Naive thymus-derived CD4-positive, alpha-beta T cell (primary cell): ENCODE measurements at regions of chr15 and their contacts with region 1.

Region 1: DNA sequence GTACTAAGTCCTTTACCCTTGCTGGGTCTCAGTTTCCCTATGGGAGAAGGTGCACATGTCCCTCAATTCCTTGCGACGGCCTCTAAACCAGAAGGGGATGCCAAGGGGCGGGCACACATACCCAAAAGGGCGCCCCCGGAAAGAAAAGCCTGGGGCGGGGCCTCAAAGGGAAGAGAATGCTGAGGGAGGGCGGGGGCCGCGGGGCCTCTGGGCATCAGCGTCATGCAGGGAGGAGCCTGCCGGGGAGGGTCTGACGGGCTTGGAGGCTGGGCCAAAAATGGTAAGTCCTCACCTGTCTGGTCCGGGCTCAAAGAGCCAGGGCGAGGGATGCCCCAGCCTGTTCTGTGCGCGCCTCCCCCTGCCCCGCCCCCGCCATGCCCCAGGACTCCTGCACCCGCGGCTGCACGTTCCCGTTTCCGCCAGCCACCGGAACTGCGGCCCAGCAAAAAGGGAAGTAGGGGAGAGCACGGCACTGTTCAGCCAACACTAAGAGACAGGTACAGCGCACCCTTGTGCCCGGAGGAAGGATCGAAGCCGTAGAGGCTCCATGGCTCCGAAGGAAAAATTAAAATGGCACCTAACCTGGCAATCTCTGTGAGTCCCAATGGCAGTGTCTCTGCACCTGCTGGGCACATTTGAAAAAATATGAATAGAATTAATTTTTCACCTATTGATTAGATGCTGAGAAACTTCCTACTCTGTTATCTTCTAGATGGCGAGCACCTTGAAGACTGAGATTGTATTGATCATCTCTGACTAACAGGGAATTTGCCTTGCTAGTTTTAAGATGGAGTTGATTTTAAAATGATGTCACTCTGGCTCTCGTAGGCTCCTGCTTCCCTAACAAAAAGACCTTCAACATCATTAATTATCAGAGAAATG is at the start of gene DET1:
- DNase-seq: peak; percentile 75 to 94 (median 92)
- ATAC-seq: peak; percentile 97
- H3K4me3 ChIP-seq: peak within 1 kb of the TSS; percentile 66
- H3K4me3 Mint-ChIP-seq: peak within 1 kb of the TSS; percentile 80 to 96 (median 90)
- H3K27ac ChIP-seq: peak within 1 kb of the TSS; percentile 81
- H3K27ac Mint-ChIP-seq: peak within 1 kb of the TSS; percentile 85 to 97 (median 92)
- H3K4me1 ChIP-seq: peaks cover 0 to 5% of the 10 kb centered on the region in 2 donors
- H3K4me1 Mint-ChIP-seq: peaks cover 9 to 24% (median 14%) of the 10 kb centered on the region in 7 donors
- H3K27me3 ChIP-seq: no peaks in the 10 kb centered on the region
- H3K27me3 Mint-ChIP-seq: no peaks in the 10 kb centered on the region
- total RNA-seq, gene DET1: 4.5 to 16.5 (median 8.4) TPM

Region 2: DNA sequence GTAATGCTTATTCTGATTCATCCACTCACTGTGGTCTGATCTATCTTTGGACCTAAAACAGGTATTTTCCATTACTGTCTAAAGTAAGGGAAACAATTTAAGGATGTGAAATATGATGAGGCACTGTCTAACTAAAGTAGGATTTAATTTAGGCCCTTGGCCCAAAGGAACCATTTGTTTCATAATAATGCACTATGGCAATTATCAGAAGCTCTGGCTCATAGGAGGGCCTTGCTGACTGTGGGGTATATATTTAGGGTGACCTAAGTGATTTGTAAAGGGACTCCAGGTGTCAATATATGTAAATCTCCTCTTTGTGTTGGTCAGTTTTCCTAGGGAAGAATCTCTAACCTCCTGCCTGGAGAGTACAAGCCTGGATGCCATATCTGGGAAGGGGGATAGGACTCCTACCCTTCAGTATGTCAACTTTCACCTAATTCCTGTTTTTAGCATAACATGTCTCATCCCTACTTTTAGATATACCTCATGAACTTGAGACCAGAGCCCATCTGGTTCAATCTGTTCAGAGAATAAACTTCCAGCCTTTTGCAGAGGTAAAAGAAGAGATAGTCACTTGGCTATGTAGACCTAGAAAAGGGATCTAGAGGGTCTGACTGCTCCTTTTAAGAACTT is 20.1 kb before region 1 on chr15:
- CTCF ChIA-PET with region 1: no interaction called
- POLR2A ChIA-PET with region 1: interaction called, 3 read pairs
- intact Hi-C with region 1: loop called in 1 of 2 experiments (anchors 2 kb)
- DNase-seq: no peak
- ATAC-seq: no peak
- H3K4me3 ChIP-seq: no peak overlapping the region
- H3K4me3 Mint-ChIP-seq: no peak overlapping the region
- H3K27ac ChIP-seq: no peak overlapping the region
- H3K27ac Mint-ChIP-seq: no peak overlapping the region
- H3K4me1 ChIP-seq: no peaks in the 10 kb centered on the region
- H3K4me1 Mint-ChIP-seq: peaks cover 0 to 18% (median 8%) of the 10 kb centered on the region in 7 donors
- H3K27me3 ChIP-seq: no peaks in the 10 kb centered on the region
- H3K27me3 Mint-ChIP-seq: no peaks in the 10 kb centered on the region

Region 3: GRCh38 chr15:88638626-88639372 is 92.3 kb after region 1 on chr15 and contains the start of gene ISG20:
- CTCF ChIA-PET with region 1: no interaction called
- POLR2A ChIA-PET with region 1: interaction called, 3 read pairs
- intact Hi-C with region 1: loop called (anchors 1 kb)
- DNase-seq: peak; percentile 84 to 100 (median 99)
- ATAC-seq: peak; percentile 94
- H3K4me3 ChIP-seq: peak within 1 kb of the TSS; percentile 70
- H3K4me3 Mint-ChIP-seq: peak within 1 kb of the TSS; percentile 83 to 99 (median 94)
- H3K27ac ChIP-seq: peak within 1 kb of the TSS; percentile 99
- H3K27ac Mint-ChIP-seq: peak within 1 kb of the TSS; percentile 96 to 100 (median 99)
- H3K4me1 ChIP-seq: peaks cover 76 to 81% of the 10 kb centered on the region in 2 donors
- H3K4me1 Mint-ChIP-seq: peaks cover 58 to 87% (median 80%) of the 10 kb centered on the region in 7 donors
- H3K27me3 ChIP-seq: no peaks in the 10 kb centered on the region
- H3K27me3 Mint-ChIP-seq: peaks cover 0 to 2% (median 0%) of the 10 kb centered on the region in 5 donors
- total RNA-seq, gene ISG20: 92.5 to 160 (median 149) TPM

Region 4: GRCh38 chr15:88904624-88905327 is 358.3 kb after region 1 on chr15:
- CTCF ChIA-PET with region 1: no interaction called
- POLR2A ChIA-PET with region 1: no interaction called
- intact Hi-C with region 1: loop called in 1 of 2 experiments (anchors 2 kb)
- DNase-seq: peak; percentile 79 to 99 (median 98)
- ATAC-seq: peak; percentile 99
- H3K4me3 ChIP-seq: no peak overlapping the region
- H3K4me3 Mint-ChIP-seq: peak overlapping the region; percentile 16 to 78 (median 54)
- H3K27ac ChIP-seq: peak overlapping the region; percentile 70
- H3K27ac Mint-ChIP-seq: peak overlapping the region; percentile 76 to 98 (median 94)
- H3K4me1 ChIP-seq: peaks cover 19 to 37% of the 10 kb centered on the region in 2 donors
- H3K4me1 Mint-ChIP-seq: peaks cover 23 to 65% (median 52%) of the 10 kb centered on the region in 7 donors
- H3K27me3 ChIP-seq: no peaks in the 10 kb centered on the region
- H3K27me3 Mint-ChIP-seq: no peaks in the 10 kb centered on the region

Region 5: GRCh38 chr15:89243691-89244471 is 697.4 kb after region 1 on chr15 and contains the start of gene FANCI:
- CTCF ChIA-PET with region 1: no interaction called
- POLR2A ChIA-PET with region 1: no interaction called
- intact Hi-C with region 1: loop called (anchors 2 to 5 kb)
- DNase-seq: peak; percentile 89 to 97 (median 94)
- ATAC-seq: peak; percentile 100
- H3K4me3 ChIP-seq: peak within 1 kb of the TSS; percentile 79
- H3K4me3 Mint-ChIP-seq: peak within 1 kb of the TSS; percentile 86 to 98 (median 94)
- H3K27ac ChIP-seq: peak within 1 kb of the TSS; percentile 65
- H3K27ac Mint-ChIP-seq: peak within 1 kb of the TSS; percentile 78 to 96 (median 84)
- H3K4me1 ChIP-seq: peaks cover 6 to 13% of the 10 kb centered on the region in 2 donors
- H3K4me1 Mint-ChIP-seq: peaks cover 20 to 40% (median 26%) of the 10 kb centered on the region in 7 donors
- H3K27me3 ChIP-seq: no peaks in the 10 kb centered on the region
- H3K27me3 Mint-ChIP-seq: peaks cover 0 to 8% (median 0%) of the 10 kb centered on the region in 5 donors
- total RNA-seq, gene FANCI: 8.0 to 132 (median 9.7) TPM